AG04449 (cell line): ENCODE measurements at regions of chr1 and their contacts with region 1.

Region 1: DNA sequence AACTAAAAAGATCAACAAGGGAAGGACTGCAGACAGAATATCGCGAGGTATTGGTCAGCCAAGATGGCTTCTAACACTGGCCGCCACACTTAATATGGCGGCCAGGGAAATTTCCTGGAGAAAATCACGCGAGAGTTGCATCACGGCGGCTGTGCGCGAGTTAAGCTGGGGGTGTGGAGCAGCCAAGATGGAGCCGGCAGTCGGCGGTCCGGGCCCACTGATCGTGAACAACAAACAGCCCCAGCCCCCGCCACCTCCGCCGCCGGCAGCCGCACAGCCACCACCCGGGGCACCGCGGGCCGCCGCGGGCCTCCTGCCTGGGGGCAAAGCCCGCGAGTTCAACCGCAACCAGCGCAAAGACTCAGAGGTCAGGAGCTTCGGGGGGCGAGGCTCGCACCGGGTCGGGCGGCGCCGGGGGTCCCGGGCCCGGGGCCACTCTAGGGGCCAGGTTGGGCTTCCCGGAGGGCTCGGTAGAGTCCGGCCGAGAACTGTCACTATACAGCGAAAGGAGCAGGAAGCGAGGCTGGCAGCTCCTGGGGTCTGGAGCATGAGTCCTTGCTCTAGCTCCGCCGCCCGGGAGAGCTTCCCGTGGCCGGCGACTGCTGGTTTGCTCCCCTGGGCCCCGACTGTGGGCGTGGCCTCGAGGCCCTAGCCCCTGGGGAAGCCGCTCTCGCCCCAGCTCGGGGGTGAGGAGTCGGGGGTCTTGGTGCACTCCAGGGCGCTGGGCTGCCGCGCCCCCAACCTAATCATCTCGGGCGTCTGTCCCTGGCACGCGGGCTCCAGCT is at the start of gene STRIP1:
- DNase-seq: peak; percentile 78
- H3K4me3 ChIP-seq: peak within 1 kb of the TSS; percentile 84
- CTCF ChIP-seq: no peak

Region 2: GRCh38 chr1:110003747-110004630 is 30.7 kb before region 1 on chr1:
- CTCF ChIA-PET with region 1: interaction called, 14 read pairs
- POLR2A ChIA-PET with region 1: no interaction called
- DNase-seq: peak; percentile 93
- H3K4me3 ChIP-seq: peak overlapping the region; percentile 48
- CTCF ChIP-seq: no peak

Region 3: DNA sequence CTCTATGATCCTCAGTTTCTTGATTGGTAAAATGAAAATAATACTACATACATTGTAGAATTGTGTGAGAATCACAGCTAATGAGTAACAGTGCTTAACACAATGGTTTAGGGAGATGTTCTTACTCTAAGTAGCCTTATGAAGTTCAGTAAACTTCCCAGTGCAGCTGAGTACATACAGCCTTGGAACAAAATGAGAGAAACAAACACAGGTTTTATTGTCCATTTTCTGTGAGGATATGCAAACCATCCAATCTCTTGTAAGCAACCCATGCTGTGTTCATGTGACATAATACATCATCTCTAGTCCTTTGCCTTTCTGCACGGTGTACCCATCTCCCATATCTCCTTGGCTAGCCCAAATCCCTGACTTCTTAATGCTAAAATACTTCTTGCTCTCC is 14.9 kb before region 1 on chr1:
- CTCF ChIA-PET with region 1: interaction called, 94 read pairs
- POLR2A ChIA-PET with region 1: no interaction called
- DNase-seq: no peak
- H3K4me3 ChIP-seq: no peak overlapping the region
- CTCF ChIP-seq: no peak

Region 4: GRCh38 chr1:110106013-110106941 is 71.6 kb after region 1 on chr1:
- CTCF ChIA-PET with region 1: interaction called, 183 read pairs
- POLR2A ChIA-PET with region 1: interaction called, 4 read pairs
- DNase-seq: no peak
- H3K4me3 ChIP-seq: no peak overlapping the region
- CTCF ChIP-seq: peak; percentile 92

Region 5: DNA sequence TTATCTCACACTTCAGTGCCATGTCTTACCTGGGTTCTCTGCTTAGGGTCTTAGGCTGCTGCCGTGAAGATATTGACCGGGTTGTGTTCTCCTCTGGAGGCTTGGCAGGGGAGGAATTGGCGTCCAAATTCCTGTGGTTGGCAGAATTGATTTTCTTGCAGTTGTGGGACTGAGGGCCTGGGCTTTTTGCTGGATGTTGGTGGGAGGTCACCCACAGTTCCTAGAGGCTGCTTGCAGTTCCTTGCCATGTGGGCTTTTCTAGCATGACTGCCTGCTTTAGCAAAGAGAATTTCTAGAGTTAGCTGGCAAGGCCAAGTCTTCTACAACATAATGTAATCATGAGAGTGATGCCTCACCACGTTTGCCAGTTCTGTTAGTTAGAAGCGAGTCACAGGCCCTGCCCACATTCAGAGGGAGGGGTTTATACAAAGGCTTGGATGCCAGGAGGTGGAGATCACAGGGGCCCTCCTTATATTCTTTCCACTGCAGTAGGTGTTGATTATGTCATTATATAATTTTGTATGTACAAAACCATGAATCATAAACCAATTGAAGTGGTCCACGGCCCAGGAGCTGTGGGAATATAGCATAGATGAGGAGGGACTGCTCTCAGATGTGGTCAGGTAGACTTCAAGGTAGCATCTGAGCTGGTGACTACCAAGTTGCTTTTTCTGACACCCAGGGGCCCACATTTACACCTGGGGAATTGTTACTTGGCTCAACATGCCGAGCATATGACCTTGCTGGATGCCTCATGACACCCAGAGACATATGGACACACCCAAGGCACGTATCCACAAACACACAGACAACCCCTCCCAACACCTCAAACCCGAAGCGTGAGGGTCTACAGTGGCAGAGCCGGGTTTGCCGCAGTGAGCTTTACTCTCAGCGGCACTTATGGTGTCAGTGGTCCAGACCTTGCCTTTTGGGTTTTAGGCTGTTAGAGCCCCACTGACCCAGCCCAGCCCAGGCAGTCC is 84.3 kb after region 1 on chr1:
- CTCF ChIA-PET with region 1: interaction called, 27 read pairs
- POLR2A ChIA-PET with region 1: interaction called, 4 read pairs
- DNase-seq: no peak
- H3K4me3 ChIP-seq: no peak overlapping the region
- CTCF ChIP-seq: no peak

Region 6: GRCh38 chr1:110212165-110213142 is 177.8 kb after region 1 on chr1:
- CTCF ChIA-PET with region 1: no interaction called
- POLR2A ChIA-PET with region 1: no interaction called
- DNase-seq: no peak
- H3K4me3 ChIP-seq: no peak overlapping the region
- CTCF ChIP-seq: no peak